ENCODE measurements at regions of chr13 and their contacts with region 1.

Region 1: DNA sequence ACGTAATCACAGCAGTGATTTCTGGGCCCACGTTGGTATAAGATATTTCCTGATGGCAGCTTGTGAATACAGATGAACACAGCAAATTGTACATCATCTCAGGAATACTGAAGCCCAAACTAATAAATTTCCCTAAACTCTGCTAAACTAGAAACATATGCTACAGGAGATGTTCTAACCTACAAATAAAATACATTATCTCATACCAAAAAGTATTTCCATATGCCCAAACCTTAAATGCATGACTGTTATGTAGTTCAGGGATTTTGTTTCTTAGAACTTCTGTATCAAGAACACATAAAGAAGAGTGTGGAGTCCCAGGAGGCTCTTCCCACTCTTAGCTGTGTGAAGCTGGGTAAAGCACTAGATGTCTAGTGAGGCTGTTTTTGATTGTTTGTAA is 138.4 kb downstream of the RFC3 start:
- DNase-seq: no peak
- ATAC-seq: no peak
- H3K4me3 ChIP-seq: no peak overlapping the region
- H3K27ac ChIP-seq: peak overlapping the region; percentile 82
- H3K4me1 ChIP-seq: peaks cover 54% of the 10 kb centered on the region
- H3K27me3 ChIP-seq: no peaks in the 10 kb centered on the region
- CTCF ChIP-seq: no peak
- EP300 ChIP-seq: no peak
- POLR2A ChIP-seq: no peak
- RAD21 ChIP-seq: no peak

Region 2: DNA sequence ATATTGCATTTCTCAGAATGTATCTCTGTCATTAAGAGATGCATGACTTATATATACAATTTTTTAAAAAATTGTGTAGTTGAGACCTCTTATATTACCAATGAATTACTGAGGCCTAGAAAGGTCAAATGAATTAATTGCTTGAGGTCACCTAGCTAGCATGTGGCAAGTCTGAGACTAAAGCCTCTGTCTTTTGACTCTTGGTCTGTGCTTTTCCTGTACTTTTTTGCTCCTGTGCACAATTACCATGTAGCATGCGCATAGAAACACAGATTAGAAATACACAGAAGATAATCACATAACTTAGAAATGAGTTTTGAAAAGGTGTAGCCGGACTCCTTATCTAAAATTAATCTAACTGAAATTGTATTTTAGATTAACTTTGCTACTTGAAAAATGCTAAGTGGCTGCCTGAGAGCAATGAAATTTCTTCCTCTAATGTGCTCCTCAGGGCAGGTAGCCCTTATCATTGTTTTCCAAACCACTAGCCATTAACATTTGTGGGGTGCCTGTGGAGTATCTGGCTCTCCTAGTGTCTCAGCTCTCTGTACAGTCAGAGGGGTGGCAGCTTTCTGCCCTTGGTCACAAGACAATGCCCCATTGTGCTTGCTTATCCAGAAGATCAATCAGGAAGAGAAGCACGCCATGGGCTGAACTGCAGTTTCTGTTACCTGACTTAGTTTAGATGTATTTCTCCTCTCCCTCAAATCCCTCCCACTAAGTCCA is 18.8 kb before region 1 on chr13:
- CTCF ChIA-PET with region 1: no interaction called
- POLR2A ChIA-PET with region 1: interaction called, 4 read pairs
- in situ Hi-C with region 1: no loop called
- intact Hi-C with region 1: loop called (anchors 2 kb)
- DNase-seq: peak; percentile 87
- ATAC-seq: peak; percentile 99
- H3K4me3 ChIP-seq: no peak overlapping the region
- H3K27ac ChIP-seq: peak overlapping the region; percentile 59
- H3K4me1 ChIP-seq: peaks cover 33% of the 10 kb centered on the region
- H3K27me3 ChIP-seq: no peaks in the 10 kb centered on the region
- CTCF ChIP-seq: no peak
- EP300 ChIP-seq: no peak; a peak in 1 of 4 replicates
- POLR2A ChIP-seq: no peak
- RAD21 ChIP-seq: no peak

Measured in HepG2 (cell line).